ENCODE measurements at regions of chr2 and their contacts with region 1.

Region 1: GRCh38 chr2:88187038-88187676 is 17.0 kb downstream of the THNSL2 start:
- DNase-seq: no peak
- ATAC-seq: peak; percentile 60
- H3K4me3 ChIP-seq: no peak overlapping the region
- H3K27ac ChIP-seq: no peak overlapping the region
- H3K4me1 ChIP-seq: no peaks in the 10 kb centered on the region
- H3K27me3 ChIP-seq: no peaks in the 10 kb centered on the region; a peak in 1 of 4 replicates
- CTCF ChIP-seq: peak; percentile 45 to 60 (median 59)
- EP300 ChIP-seq: no peak
- POLR2A ChIP-seq: no peak
- RAD21 ChIP-seq: peak; percentile 38; the same call in 1 of the 2 replicates

Region 2: DNA sequence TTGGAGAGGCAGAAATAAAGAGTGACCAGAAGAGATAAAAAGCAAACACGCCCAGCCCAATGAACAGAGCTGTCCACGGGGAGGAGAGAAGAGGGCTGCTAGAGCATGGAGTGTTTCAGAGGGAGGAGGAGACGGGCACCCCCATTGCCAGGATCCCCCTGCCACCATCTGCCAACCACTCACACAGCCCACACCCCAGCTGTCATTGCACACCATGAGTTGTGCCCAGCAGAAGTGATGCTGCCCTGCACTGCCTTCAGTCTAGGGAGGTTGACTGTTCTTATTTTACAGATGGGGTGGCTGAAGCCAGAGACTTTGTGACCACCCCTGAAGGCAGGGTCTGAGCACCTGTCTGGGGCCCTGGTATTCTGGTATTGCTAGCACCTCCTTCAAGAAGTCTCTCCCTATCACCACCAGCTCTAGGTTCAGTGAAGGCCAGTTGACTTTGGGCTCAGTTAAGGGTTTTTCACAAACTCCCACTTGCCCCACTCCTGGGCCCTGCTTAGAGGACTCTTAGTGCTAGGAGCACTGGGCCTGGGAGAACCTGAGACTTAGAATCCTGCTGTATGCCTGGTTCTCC is 61.7 kb before region 1 on chr2:
- CTCF ChIA-PET with region 1: no interaction called
- POLR2A ChIA-PET with region 1: no interaction called
- RAD21 ChIA-PET with region 1: no interaction called
- SMC1A ChIA-PET with region 1: no interaction called
- in situ Hi-C with region 1: no loop called
- intact Hi-C with region 1: no loop called
- DNase-seq: no peak
- ATAC-seq: no peak
- H3K4me3 ChIP-seq: no peak overlapping the region
- H3K27ac ChIP-seq: no peak overlapping the region
- H3K4me1 ChIP-seq: no peaks in the 10 kb centered on the region
- H3K27me3 ChIP-seq: no peaks in the 10 kb centered on the region; a peak in 1 of 4 replicates
- CTCF ChIP-seq: no peak
- EP300 ChIP-seq: no peak
- POLR2A ChIP-seq: no peak
- RAD21 ChIP-seq: no peak

Region 3: DNA sequence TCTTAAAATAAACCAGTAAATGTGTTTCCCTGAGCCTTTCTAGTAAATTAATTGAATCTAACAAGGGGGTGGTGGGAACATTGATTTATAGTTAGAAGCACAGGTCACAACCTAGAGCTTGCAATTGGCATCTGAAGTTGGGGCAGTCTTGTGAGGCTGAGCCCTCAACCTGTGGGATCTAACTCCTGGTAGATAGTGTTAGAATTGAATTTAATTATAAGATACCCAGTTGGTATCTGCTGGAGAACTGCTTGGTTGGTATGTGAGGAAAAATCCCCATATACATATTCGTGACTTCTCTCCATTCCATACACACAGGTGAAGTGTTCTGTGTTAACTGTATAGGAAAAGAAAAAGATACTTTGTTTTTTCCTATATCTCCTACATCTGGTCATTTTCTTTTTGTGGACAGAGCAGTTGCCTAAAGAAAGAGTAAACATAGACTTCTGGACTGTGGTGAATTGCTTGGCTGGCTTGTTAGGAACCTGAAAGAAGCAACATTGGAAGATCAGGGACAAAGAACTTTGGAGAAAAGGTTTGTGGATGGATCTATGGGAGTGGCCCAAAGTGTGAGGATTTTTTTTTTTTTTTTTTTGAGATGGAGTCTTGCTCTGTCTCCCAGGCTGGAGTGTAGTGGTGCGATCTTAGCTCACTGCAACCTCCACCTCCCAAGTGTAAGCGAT is 19.6 kb after region 1 on chr2:
- CTCF ChIA-PET with region 1: interaction called, 11 read pairs
- POLR2A ChIA-PET with region 1: no interaction called
- RAD21 ChIA-PET with region 1: no interaction called
- SMC1A ChIA-PET with region 1: interaction called, 11 read pairs
- in situ Hi-C with region 1: no loop called
- intact Hi-C with region 1: no loop called
- DNase-seq: no peak
- ATAC-seq: no peak
- H3K4me3 ChIP-seq: no peak overlapping the region
- H3K27ac ChIP-seq: no peak overlapping the region
- H3K4me1 ChIP-seq: no peaks in the 10 kb centered on the region
- H3K27me3 ChIP-seq: no peaks in the 10 kb centered on the region
- CTCF ChIP-seq: no peak
- EP300 ChIP-seq: no peak
- POLR2A ChIP-seq: no peak
- RAD21 ChIP-seq: no peak

Region 4: GRCh38 chr2:88212251-88212790 is 25.2 kb after region 1 on chr2:
- CTCF ChIA-PET with region 1: interaction called, 9 read pairs
- POLR2A ChIA-PET with region 1: no interaction called
- RAD21 ChIA-PET with region 1: no interaction called
- SMC1A ChIA-PET with region 1: interaction called, 11 read pairs
- in situ Hi-C with region 1: no loop called
- intact Hi-C with region 1: no loop called
- DNase-seq: no peak
- ATAC-seq: peak; percentile 75
- H3K4me3 ChIP-seq: no peak overlapping the region
- H3K27ac ChIP-seq: no peak overlapping the region
- H3K4me1 ChIP-seq: no peaks in the 10 kb centered on the region
- H3K27me3 ChIP-seq: no peaks in the 10 kb centered on the region
- CTCF ChIP-seq: peak; percentile 21 to 42 (median 33); a peak in 4 of 6 replicates
- EP300 ChIP-seq: no peak
- POLR2A ChIP-seq: no peak
- RAD21 ChIP-seq: no peak

Region 5: DNA sequence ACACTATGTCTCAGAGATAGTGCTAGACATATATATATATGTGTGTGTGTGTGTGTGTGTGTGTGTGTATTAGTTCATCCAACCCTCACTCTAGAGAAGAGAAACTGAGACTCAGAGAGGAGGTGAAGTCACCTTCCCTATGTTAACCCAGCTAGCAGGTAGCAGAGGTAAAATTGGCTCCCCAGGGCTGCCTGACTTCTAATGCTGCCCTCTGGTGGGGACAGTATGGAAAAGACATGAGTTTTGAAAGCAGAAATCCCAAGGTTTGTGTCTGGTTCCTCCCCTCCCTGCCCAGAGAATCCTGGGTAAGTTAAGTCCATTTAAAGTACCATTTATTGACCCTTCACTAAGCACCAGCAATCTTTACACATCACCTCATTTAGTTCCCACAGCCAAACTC is 120.7 kb after region 1 on chr2:
- CTCF ChIA-PET with region 1: interaction called, 19 read pairs
- POLR2A ChIA-PET with region 1: no interaction called
- RAD21 ChIA-PET with region 1: interaction called, 12 read pairs
- SMC1A ChIA-PET with region 1: interaction called, 17 read pairs
- in situ Hi-C with region 1: no loop called
- intact Hi-C with region 1: loop called (anchors 5 kb)
- DNase-seq: no peak
- ATAC-seq: peak; percentile 56
- H3K4me3 ChIP-seq: no peak overlapping the region
- H3K27ac ChIP-seq: no peak overlapping the region
- H3K4me1 ChIP-seq: no peaks in the 10 kb centered on the region
- H3K27me3 ChIP-seq: no peaks in the 10 kb centered on the region
- CTCF ChIP-seq: peak; percentile 35 to 48 (median 46); a peak in 5 of 6 replicates
- EP300 ChIP-seq: no peak
- POLR2A ChIP-seq: no peak
- RAD21 ChIP-seq: peak; percentile 32; the same call in 1 of the 2 replicates

Region 6: GRCh38 chr2:88398180-88398579 is 211.0 kb after region 1 on chr2:
- CTCF ChIA-PET with region 1: interaction called, 6 read pairs
- POLR2A ChIA-PET with region 1: no interaction called
- RAD21 ChIA-PET with region 1: interaction called, 4 read pairs
- SMC1A ChIA-PET with region 1: interaction called, 4 read pairs
- in situ Hi-C with region 1: no loop called
- intact Hi-C with region 1: loop called (anchors 5 kb)
- DNase-seq: no peak
- ATAC-seq: no peak
- H3K4me3 ChIP-seq: no peak overlapping the region
- H3K27ac ChIP-seq: no peak overlapping the region
- H3K4me1 ChIP-seq: no peaks in the 10 kb centered on the region
- H3K27me3 ChIP-seq: no peaks in the 10 kb centered on the region
- CTCF ChIP-seq: no peak
- EP300 ChIP-seq: no peak
- POLR2A ChIP-seq: no peak
- RAD21 ChIP-seq: no peak

Region 7: GRCh38 chr2:88429929-88430328 is 242.8 kb after region 1 on chr2:
- CTCF ChIA-PET with region 1: no interaction called
- POLR2A ChIA-PET with region 1: no interaction called
- RAD21 ChIA-PET with region 1: no interaction called
- SMC1A ChIA-PET with region 1: no interaction called
- in situ Hi-C with region 1: no loop called
- intact Hi-C with region 1: no loop called
- DNase-seq: no peak
- ATAC-seq: no peak
- H3K4me3 ChIP-seq: no peak overlapping the region
- H3K27ac ChIP-seq: no peak overlapping the region
- H3K4me1 ChIP-seq: no peaks in the 10 kb centered on the region
- H3K27me3 ChIP-seq: no peaks in the 10 kb centered on the region
- CTCF ChIP-seq: no peak
- EP300 ChIP-seq: no peak
- POLR2A ChIP-seq: no peak
- RAD21 ChIP-seq: no peak

Region 8: DNA sequence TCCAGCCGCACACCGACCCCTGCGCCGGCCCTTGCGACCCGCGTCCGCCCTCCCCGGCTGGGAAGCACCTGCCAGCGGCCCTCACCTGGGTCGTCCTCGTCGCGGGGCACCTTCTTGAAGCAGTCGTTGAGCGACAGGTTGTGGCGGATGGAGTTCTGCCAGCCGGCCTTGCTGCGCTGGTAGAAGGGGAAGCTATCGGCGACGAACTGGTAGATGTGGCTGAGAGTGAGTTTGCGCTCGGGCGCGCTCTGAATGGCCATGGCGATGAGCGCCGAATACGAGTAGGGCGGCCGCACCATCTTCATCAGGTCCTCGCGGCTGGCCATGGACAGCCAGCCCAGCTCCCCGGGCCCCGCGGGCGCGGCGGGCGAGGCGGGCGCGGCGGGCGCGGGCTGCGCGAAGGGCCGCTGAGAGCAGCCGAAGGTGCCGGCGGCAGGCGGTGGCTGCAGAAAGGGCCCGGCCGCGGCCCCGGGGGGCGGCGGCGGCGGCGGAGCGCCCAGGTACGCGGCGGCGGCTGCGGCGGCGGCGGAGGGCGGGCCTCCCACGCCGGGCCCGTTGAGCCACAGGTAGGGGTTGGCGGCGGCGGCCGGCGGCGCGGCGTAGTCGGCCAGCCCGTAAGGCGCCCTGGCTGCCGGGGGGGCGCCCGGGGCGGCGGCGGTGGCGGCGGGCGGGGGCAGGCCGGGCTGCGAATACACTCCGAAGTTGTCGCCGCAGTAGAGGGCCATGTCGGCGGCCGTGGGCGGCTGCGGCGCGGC is 264.8 kb after region 1 on chr2:
- CTCF ChIA-PET with region 1: interaction called, 29 read pairs
- POLR2A ChIA-PET with region 1: no interaction called
- RAD21 ChIA-PET with region 1: interaction called, 15 read pairs
- SMC1A ChIA-PET with region 1: interaction called, 10 read pairs
- in situ Hi-C with region 1: no loop called
- intact Hi-C with region 1: loop called (anchors 2 kb)
- DNase-seq: no peak
- ATAC-seq: no peak
- H3K4me3 ChIP-seq: no peak overlapping the region
- H3K27ac ChIP-seq: no peak overlapping the region
- H3K4me1 ChIP-seq: no peaks in the 10 kb centered on the region
- H3K27me3 ChIP-seq: peaks cover 4 to 12% of the 10 kb centered on the region in 2 experiments
- CTCF ChIP-seq: no peak
- EP300 ChIP-seq: no peak
- POLR2A ChIP-seq: no peak
- RAD21 ChIP-seq: no peak

Region 9: GRCh38 chr2:88574445-88574844 is 387.3 kb after region 1 on chr2:
- CTCF ChIA-PET with region 1: no interaction called
- POLR2A ChIA-PET with region 1: no interaction called
- RAD21 ChIA-PET with region 1: no interaction called
- SMC1A ChIA-PET with region 1: no interaction called
- in situ Hi-C with region 1: no loop called
- intact Hi-C with region 1: loop called (anchors 10 kb)
- DNase-seq: no peak
- ATAC-seq: peak; percentile 56; the same call in 2 of the 3 replicates
- H3K4me3 ChIP-seq: no peak overlapping the region
- H3K27ac ChIP-seq: no peak overlapping the region
- H3K4me1 ChIP-seq: peaks cover 10% of the 10 kb centered on the region; the same call in 1 of the 2 replicates
- H3K27me3 ChIP-seq: no peaks in the 10 kb centered on the region
- CTCF ChIP-seq: no peak
- EP300 ChIP-seq: no peak
- POLR2A ChIP-seq: no peak
- RAD21 ChIP-seq: no peak